Activated CD4-positive, alpha-beta memory T cell treated with anti-CD3 and anti-CD28 coated beads for 36 hours (primary cell): ENCODE measurements at regions of chr7 and their contacts with region 1.

Region 1: DNA sequence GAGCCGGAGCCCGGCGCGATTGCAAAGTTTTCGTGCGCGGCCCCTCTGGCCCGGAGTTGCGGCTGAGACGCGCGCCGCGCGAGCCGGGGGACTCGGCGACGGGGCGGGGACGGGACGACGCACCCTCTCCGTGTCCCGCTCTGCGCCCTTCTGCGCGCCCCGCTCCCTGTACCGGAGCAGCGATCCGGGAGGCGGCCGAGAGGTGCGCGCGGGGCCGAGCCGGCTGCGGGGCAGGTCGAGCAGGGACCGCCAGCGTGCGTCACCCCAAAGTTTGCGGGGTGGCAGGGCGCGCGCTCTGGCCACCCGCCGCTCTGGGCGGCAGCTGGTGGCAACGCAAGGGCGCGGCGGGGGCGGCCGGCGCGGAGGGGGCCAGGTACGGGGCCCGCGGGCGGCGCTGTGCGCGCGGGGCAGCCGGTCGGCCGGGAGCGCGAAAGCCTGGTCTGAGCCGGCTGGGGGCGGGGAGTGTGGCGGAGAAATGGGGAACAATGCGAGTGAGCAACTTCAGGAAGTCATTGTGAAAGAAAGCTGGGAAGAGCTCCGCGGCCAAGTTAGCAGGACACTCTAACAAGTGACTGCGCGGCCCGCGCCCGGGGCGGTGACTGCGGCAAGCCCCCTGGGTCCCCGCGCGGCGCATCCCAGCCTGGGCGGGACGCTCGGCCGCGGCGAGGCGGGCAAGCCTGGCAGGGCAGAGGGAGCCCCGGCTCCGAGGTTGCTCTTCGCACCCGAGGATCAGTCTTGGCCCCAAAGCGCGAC is at the start of gene IKZF1:
- DNase-seq: peak; percentile 76
- H3K4me3 Mint-ChIP-seq: peak within 1 kb of the TSS; percentile 86
- H3K27ac Mint-ChIP-seq: peak within 1 kb of the TSS; percentile 94
- H3K4me1 Mint-ChIP-seq: peaks cover 42% of the 10 kb centered on the region
- H3K27me3 Mint-ChIP-seq: no peaks in the 10 kb centered on the region
- total RNA-seq, gene IKZF1: 207 to 216 TPM

Region 2: GRCh38 chr7:50212666-50213621 is 91.4 kb before region 1 on chr7:
- CTCF ChIA-PET with region 1: interaction called, 159 read pairs
- POLR2A ChIA-PET with region 1: interaction called, 34 read pairs
- intact Hi-C with region 1: no loop called
- DNase-seq: peak; percentile 47
- H3K4me3 Mint-ChIP-seq: peak overlapping the region; percentile 28
- H3K27ac Mint-ChIP-seq: peak overlapping the region; percentile 71
- H3K4me1 Mint-ChIP-seq: peaks cover 84% of the 10 kb centered on the region
- H3K27me3 Mint-ChIP-seq: no peaks in the 10 kb centered on the region

Region 3: GRCh38 chr7:50281680-50282445 is 22.5 kb before region 1 on chr7:
- CTCF ChIA-PET with region 1: no interaction called
- POLR2A ChIA-PET with region 1: no interaction called
- intact Hi-C with region 1: no loop called
- DNase-seq: no peak
- H3K4me3 Mint-ChIP-seq: peak overlapping the region; percentile 25
- H3K27ac Mint-ChIP-seq: peak overlapping the region; percentile 42
- H3K4me1 Mint-ChIP-seq: peaks cover 49% of the 10 kb centered on the region
- H3K27me3 Mint-ChIP-seq: no peaks in the 10 kb centered on the region

Region 4: DNA sequence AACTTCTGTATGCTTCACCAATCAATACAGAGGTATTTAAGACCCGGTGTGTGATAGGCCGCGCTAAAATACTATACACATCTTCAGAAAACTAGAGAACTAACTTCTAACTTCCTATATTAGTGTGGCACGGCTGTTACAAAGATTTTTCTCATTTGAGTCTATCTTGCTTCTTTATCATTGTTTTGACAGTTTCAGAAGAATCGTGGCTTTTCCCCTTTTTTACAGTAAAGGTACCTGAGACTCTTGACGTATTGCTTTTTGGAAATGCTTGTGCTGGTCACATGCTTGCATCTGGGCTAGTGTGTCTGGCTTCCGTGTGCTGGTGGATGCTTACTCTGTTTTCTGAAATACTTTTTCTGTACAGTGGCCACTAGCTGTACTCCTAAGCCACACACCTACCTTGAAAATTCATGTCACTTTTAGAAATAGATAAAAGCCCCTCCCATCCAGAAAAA is 12.9 kb after region 1 on chr7:
- CTCF ChIA-PET with region 1: interaction called, 26 read pairs
- POLR2A ChIA-PET with region 1: interaction called, 132 read pairs
- intact Hi-C with region 1: loop called (anchors 1 kb)
- DNase-seq: peak; percentile 75
- H3K4me3 Mint-ChIP-seq: peak overlapping the region; percentile 86
- H3K27ac Mint-ChIP-seq: peak overlapping the region; percentile 94
- H3K4me1 Mint-ChIP-seq: peaks cover 92% of the 10 kb centered on the region
- H3K27me3 Mint-ChIP-seq: no peaks in the 10 kb centered on the region

Region 5: GRCh38 chr7:50349963-50350944 is 45.9 kb after region 1 on chr7:
- CTCF ChIA-PET with region 1: interaction called, 12 read pairs
- POLR2A ChIA-PET with region 1: interaction called, 157 read pairs
- intact Hi-C with region 1: loop called (anchors 1 kb)
- DNase-seq: peak; percentile 94
- H3K4me3 Mint-ChIP-seq: peak overlapping the region; percentile 14
- H3K27ac Mint-ChIP-seq: peak overlapping the region; percentile 92
- H3K4me1 Mint-ChIP-seq: peaks cover 98% of the 10 kb centered on the region
- H3K27me3 Mint-ChIP-seq: no peaks in the 10 kb centered on the region

Region 6: DNA sequence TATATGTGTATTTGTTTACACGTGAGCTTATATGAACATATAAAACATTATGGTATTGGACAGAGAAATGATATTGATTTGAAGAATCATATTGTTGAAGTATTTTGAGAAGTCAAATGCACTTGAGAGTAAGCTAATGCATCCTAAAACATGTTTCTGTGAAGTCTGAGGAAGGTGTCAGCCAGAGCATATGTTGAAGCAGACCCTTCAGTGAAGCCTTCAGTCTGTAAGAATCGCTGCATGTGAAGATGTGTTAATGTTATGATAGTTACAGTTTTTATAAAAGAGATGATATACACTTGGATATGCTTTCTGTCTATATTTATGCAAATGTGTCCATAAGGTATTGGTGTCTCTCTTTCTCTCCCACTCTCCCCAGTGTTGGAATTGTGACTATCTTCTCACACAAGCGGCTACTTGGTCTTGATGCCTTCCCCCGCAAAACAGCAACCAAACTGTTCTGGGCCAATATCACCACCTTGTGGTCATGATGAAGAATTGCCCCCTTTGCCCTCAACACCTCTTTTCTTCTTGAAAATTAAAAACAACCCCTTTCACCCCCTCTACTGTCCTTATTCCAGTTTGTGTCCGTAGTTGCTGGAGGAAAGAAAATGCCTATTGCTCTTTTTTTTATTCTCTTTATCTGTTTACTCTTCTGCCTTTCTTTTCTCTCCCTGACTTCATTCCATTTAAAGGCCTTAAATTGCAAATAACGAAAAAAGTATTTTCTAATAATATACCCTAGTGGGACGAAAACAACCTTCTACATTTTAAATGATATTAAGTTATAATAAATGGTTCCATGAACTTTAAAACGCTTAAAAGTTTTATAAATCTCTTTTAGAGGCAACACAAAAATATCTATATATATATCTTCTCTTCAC is 65.1 kb after region 1 on chr7:
- CTCF ChIA-PET with region 1: interaction called, 83 read pairs
- POLR2A ChIA-PET with region 1: interaction called, 29 read pairs
- intact Hi-C with region 1: loop called (anchors 1 kb)
- DNase-seq: peak; percentile 56
- H3K4me3 Mint-ChIP-seq: no peak overlapping the region
- H3K27ac Mint-ChIP-seq: peak overlapping the region; percentile 93
- H3K4me1 Mint-ChIP-seq: peaks cover 97% of the 10 kb centered on the region
- H3K27me3 Mint-ChIP-seq: no peaks in the 10 kb centered on the region

Region 7: DNA sequence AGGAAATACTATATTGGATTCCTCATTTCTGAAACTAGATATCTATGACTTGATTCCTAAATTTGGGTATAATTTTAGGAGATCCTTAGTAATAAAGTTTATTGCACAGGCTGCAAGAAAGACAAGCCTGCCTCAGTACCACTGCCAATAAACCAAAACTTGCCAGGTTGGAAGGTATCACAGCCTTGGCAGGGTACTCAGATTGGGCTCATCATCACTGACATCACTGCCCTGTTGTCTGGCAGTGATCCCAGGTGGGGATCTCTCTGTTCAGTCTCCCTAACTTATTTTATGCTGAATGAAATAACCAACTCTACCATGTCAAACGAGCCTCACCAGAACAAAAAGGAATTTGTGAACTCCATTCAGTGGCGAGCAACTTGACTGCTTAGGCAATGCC is 127.0 kb after region 1 on chr7:
- CTCF ChIA-PET with region 1: no interaction called
- POLR2A ChIA-PET with region 1: no interaction called
- intact Hi-C with region 1: no loop called
- DNase-seq: no peak
- H3K4me3 Mint-ChIP-seq: no peak overlapping the region
- H3K27ac Mint-ChIP-seq: no peak overlapping the region
- H3K4me1 Mint-ChIP-seq: no peaks in the 10 kb centered on the region
- H3K27me3 Mint-ChIP-seq: no peaks in the 10 kb centered on the region